H1 (cell line): ENCODE measurements at regions of chr9 and their contacts with region 1.

Region 1: DNA sequence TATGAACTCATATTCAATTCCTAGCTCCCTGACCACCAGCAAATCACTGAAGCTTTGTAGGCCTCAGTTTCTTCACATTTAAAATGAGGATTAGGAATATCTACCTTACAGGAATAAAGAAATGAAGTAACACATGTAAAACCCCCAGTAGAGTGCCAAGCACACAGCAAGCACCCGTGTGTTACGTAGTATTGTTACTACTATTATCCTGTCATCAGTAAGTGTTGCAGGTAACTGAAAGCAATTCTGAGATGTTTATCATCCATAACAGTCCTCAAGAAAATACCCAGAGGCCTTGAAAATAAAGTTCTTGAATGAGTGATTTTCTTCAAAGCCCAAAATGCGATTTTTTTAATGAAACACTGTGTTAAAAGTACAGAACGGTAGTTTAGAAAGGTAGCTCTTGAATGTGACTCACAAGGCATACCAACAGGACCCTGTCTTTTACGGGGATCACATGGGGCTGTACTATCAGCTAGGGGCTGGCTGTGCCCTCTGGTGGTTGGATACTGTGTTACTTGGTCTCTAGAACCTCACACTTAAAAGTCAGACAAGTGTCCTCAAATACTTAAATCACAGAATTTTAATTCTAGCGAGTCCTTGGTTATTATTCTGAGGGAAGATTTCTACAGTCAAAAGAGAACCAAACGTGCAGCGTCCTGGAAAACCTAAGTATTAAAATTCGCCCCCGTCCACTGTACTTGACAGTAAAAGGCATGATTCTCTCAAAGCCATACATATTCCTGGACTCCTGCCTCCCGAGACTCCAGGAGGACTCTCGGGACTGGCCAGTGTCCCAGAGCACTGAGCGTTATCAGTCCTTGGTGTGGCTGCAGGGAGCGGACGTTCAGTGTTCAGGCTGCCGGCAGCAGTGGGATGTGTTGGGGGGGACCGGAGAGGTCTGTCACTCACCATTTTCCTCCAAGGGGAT is 725 bp downstream of the NDUFB6 start:
- DNase-seq: peak in 1 of 2 experiments; percentile 49
- H3K4me3 ChIP-seq: peak overlapping the region; percentile 70 to 98 (median 98)
- H3K27ac ChIP-seq: peak overlapping the region; percentile 81; the same call in 1 of the 2 replicates
- H3K4me1 ChIP-seq: peaks cover 0 to 4% (median under 1%) of the 10 kb centered on the region in 4 experiments; a peak in 2 of 7 replicates
- H3K27me3 ChIP-seq: no peaks in the 10 kb centered on the region
- CTCF ChIP-seq: peak; percentile 51 to 77 (median 71)
- EP300 ChIP-seq: no peak
- POLR2A ChIP-seq: no peak
- RAD21 ChIP-seq: peak; percentile 68 to 77

Region 2: GRCh38 chr9:32384364-32385151 is 187.7 kb before region 1 on chr9 and contains the start of gene ACO1:
- CTCF ChIA-PET with region 1: interaction called, 248 read pairs
- POLR2A ChIA-PET with region 1: interaction called, 4 read pairs
- DNase-seq: peak; percentile 64 to 93
- H3K4me3 ChIP-seq: peak within 1 kb of the TSS; percentile 78 to 98 (median 89)
- H3K27ac ChIP-seq: no peak within 1 kb of the TSS
- H3K4me1 ChIP-seq: peaks cover 0 to 4% (median 3%) of the 10 kb centered on the region in 4 experiments; a peak in 3 of 7 replicates
- H3K27me3 ChIP-seq: peaks cover 2 to 15% (median 8%) of the 10 kb centered on the region in 4 experiments
- CTCF ChIP-seq: peak in 1 of 3 experiments; percentile 8; a peak in 1 of 4 replicates
- EP300 ChIP-seq: no peak
- POLR2A ChIP-seq: peak in 1 of 2 experiments; percentile 56; a peak in 2 of 3 replicates
- RAD21 ChIP-seq: no peak
- total RNA-seq, gene ACO1: 45.4 and 49.8 TPM in 2 replicates

Region 3: DNA sequence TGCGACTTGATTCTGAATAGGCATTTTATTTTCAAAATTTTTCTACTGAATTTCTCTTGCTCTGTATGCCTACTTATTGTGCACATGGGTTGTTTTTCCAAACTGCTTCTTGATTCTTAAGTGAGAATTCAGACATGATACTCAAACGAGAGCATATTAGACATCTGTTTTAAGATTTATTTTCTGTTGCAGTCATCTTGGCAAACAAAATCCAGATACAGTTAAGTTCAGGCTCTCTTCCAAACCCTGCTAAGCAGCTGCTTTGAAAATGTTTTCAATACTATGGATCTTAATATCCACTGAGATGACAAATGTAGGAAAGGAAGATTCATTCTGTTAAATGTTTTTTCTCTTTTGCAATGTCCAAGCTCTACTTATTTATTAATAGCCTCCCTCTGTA is 215.6 kb after region 1 on chr9:
- CTCF ChIA-PET with region 1: no interaction called
- POLR2A ChIA-PET with region 1: no interaction called
- DNase-seq: no peak
- H3K4me3 ChIP-seq: no peak overlapping the region
- H3K27ac ChIP-seq: no peak overlapping the region
- H3K4me1 ChIP-seq: peaks cover 0 to 5% (median 2%) of the 10 kb centered on the region in 4 experiments; a peak in 2 of 7 replicates
- H3K27me3 ChIP-seq: peaks cover 7 to 26% (median 17%) of the 10 kb centered on the region in 4 experiments
- CTCF ChIP-seq: no peak
- EP300 ChIP-seq: no peak
- POLR2A ChIP-seq: no peak
- RAD21 ChIP-seq: no peak